Activated B cell treated with CpG ODN at 0.5 μM for 24 hours (primary cell): ENCODE measurements at regions of chr9 and their contacts with region 1.

Region 1: DNA sequence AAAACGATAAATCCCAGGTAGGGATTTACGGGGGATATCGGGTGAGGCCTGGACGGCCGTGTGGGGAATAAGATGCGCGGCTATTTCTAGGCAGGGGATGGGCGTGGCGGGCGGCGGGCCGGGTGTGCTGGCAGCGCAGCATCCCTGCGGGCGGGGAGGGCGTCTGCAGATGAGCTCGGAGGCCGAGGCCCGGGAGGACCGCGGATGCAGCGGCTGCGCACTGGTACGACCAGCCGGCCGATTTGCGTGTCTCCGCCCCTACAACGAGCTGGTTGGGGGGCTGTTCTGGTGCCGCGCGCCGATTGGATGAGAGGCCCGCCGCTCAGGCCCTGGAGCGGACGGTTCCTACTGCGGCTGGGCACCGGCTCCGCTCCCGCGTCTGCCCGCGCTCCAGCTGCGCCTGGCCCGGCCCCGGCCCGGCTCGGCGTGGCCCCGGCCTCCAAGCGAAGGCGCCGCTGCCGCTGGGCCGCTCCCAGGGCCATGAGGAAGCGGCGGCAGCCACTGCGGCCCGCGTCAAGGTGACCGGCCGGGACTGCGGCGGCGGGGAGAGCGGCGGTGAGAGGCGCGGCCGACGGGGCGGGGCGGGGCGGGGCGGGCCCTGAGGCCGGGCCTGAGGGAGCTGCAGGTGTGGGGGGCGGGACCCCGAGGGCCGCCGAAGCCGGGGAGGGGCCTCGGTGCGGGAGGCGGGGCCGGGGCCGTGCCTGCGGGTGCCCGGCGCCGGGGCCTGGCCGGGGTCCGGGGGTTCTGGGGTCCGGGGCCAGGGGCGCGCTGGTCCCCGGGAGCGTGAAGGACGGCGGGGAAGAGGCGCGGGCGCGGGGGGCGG is at the start of gene RALGPS1:
- DNase-seq: peak; percentile 94
- ATAC-seq: peak; percentile 96
- H3K4me3 Mint-ChIP-seq: peak within 1 kb of the TSS; percentile 81
- H3K27ac Mint-ChIP-seq: peak within 1 kb of the TSS; percentile 56
- H3K4me1 Mint-ChIP-seq: peaks cover 10% of the 10 kb centered on the region
- H3K27me3 Mint-ChIP-seq: peaks cover 6% of the 10 kb centered on the region
- CTCF ChIP-seq: no peak
- total RNA-seq, gene RALGPS1: 14.7 and 21.7 TPM in 2 replicates

Region 2: GRCh38 chr9:126804696-126805545 is 109.7 kb before region 1 on chr9 and contains the start of gene ZBTB43:
- CTCF ChIA-PET with region 1: no interaction called
- POLR2A ChIA-PET with region 1: interaction called, 3 read pairs
- intact Hi-C with region 1: loop called (anchors 2 kb)
- DNase-seq: peak; percentile 97
- ATAC-seq: peak; percentile 82
- H3K4me3 Mint-ChIP-seq: peak within 1 kb of the TSS; percentile 92
- H3K27ac Mint-ChIP-seq: peak within 1 kb of the TSS; percentile 96
- H3K4me1 Mint-ChIP-seq: peaks cover 31% of the 10 kb centered on the region
- H3K27me3 Mint-ChIP-seq: no peaks in the 10 kb centered on the region
- CTCF ChIP-seq: no peak
- total RNA-seq, gene ZBTB43: 20.3 and 22.8 TPM in 2 replicates